ENCODE measurements at regions of chr13 and their contacts with region 1.

Region 1: DNA sequence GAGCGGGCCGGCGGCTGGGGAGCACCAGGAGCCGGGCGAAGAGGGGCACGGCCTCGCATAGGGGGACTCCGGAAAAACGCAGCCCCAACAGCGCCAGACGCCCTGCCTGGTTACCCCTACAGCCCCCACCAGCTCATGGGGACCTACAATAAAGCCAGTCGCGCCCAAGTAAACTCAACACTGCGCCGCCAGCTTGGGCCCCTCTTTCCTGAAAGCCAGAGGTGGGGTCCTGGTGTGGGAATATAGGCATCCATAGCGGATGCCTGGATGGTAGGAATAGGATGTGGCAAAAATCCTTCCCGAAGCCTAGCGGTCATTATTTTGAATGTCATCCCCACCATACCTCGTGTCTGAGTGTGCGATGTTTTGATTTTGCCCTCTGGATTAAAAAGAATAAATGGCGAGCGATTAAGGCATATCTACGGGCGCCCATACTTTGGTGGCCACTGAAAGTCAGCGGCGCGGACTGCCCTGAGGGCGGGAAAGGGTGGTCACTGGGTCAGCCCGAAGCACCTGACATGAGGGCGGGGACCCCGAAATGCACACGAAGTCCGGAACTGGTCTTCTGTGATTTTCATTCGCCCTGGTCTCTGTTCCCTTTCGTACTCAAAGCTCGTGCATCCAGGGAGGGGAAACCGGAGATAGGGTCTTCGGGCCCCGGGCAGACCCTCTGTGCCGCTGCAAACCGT is at the starts of genes NHLRC3 and PROSER1:
- DNase-seq: peak; percentile 96
- ATAC-seq: peak; percentile 96
- H3K4me3 ChIP-seq: peak within 1 kb of the TSS; percentile 78 to 100
- H3K27ac ChIP-seq: peak within 1 kb of the TSS in 1 of 2 donors; percentile 64
- H3K4me1 ChIP-seq: no peaks in the 10 kb centered on the region
- H3K27me3 ChIP-seq: no peaks in the 10 kb centered on the region
- total RNA-seq, gene NHLRC3: 21.9 to 35.9 TPM
- total RNA-seq, gene PROSER1: 22.4 to 26.4 TPM

Region 2: DNA sequence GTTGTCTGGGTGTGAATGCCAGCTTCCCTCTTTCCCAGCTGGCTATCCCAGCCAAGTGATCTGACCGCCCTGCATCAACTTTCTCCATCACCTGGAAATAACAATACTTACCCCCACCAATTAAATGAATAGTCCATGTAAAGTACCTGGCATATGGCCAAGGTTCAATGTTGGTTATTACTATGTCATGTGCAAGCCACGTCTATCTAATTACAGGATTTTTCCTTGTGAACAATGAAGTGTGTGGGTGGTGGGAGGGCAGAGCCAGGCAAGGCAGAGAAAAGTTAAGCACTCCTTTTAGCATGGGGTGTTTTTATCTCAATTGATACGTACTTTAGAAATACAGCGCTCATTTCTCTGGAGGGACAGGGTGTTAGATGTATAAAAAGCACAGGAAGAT is 121.4 kb after region 1 on chr13:
- intact Hi-C with region 1: no loop called
- DNase-seq: no peak
- ATAC-seq: peak; percentile 38
- H3K4me3 ChIP-seq: no peak overlapping the region
- H3K27ac ChIP-seq: no peak overlapping the region
- H3K4me1 ChIP-seq: peaks cover 0 to 4% of the 10 kb centered on the region in 2 donors
- H3K27me3 ChIP-seq: no peaks in the 10 kb centered on the region

Region 3: DNA sequence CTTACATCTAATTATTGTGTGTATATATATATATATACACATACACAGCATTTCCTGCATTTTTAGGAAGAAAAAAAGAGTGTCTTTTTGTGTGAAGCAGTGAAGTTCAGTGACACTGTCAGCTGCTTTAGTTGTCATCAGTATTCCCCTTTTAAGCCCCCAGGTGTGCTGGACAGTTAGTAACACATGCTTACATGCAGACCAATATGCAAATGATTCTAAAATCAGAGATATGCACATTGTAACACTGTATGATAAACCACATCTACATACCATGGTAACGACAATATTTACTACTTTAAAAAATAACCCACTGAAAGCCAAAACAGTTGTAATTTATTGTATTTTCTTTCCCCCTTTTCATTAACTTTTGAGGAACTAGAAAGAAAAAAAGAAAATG is 548.1 kb after region 1 on chr13:
- intact Hi-C with region 1: no loop called
- DNase-seq: no peak
- ATAC-seq: no peak
- H3K4me3 ChIP-seq: no peak overlapping the region
- H3K27ac ChIP-seq: no peak overlapping the region
- H3K4me1 ChIP-seq: peaks cover 3 to 11% of the 10 kb centered on the region in 2 donors
- H3K27me3 ChIP-seq: no peaks in the 10 kb centered on the region

Region 4: DNA sequence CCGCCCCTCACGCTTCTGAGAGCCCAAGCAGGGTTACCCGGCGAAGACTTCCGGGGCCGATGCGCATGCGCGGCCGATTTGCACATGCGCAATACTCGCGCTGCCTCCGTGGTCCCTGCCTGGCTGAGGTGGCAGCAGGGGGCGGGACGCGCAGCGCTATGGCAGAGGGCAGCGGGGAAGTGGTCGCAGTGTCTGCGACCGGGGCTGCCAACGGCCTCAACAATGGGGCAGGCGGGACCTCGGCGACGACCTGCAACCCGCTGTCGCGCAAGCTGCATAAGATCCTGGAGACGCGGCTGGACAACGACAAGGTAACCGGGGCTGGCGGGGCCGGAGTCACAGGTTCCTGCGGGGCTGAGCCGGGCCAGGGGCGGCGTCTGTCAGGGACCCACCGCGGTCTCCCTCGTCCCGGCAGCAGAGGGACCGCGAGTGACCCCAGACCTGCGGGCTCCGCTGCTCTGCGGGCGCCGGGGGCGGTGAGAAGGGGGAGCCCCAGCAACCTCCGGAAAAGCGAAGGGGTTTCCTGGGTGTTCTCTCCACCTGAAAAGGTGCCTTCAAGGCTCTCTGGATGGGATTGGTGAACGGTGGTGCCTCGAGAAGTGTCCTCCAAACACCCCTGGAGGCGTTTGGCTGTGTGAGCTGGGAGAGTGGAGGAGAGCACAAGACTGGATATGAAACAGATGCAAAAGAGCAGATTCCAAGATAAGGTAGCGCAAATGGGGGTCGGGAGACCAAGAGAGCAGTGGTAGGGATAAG is 617.7 kb after region 1 on chr13 and contains the start of gene COG6:
- intact Hi-C with region 1: loop called in 1 of 2 experiments (anchors 10 kb)
- DNase-seq: peak; percentile 92 to 98
- ATAC-seq: peak; percentile 95
- H3K4me3 ChIP-seq: peak within 1 kb of the TSS; percentile 36 to 91
- H3K27ac ChIP-seq: no peak within 1 kb of the TSS
- H3K4me1 ChIP-seq: no peaks in the 10 kb centered on the region
- H3K27me3 ChIP-seq: no peaks in the 10 kb centered on the region
- total RNA-seq, gene COG6: 32.8 to 33.6 TPM

Measured in aorta (tissue), 5 donors.